A673 (cell line): ENCODE measurements at regions of chr20 and their contacts with region 1.

Region 1: GRCh38 chr20:34426026-34426425 is 63.0 kb downstream of the ITCH start:
- DNase-seq: no peak
- H3K4me3 ChIP-seq: no peak overlapping the region
- H3K27ac ChIP-seq: no peak overlapping the region
- H3K4me1 ChIP-seq: no peaks in the 10 kb centered on the region
- H3K27me3 ChIP-seq: no peaks in the 10 kb centered on the region
- CTCF ChIP-seq: no peak

Region 2: DNA sequence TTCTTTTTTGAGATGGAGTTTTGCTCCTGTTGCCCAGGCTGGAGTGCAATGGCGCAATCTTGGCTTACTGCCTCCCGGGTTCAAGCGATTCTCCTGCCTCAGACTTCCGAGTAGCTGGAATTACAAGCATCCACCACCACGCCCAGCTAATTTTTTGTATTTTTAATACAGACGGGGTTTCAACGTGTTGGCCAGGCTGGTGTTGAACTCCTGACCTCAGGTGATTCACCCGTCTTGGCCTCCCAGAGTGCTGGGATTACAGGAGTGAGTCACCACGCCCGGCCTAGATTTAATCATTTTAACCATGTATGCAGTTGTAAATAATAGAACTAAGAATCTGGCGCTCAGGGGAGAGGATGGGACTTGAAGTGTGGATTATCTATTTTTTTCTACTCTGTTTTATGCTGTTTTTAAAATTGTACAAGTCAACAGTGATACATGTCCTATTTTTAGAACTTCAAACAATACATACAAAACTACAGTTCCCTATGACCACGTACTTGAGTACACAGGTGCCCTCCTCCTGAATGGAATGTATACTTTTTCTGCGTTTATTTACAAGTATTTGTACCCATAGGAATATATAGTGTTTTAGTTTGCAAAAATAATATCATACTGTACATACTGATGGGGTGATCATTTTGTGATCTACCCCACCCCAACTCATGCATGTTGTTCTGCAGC is 35.1 kb before region 1 on chr20:
- CTCF ChIA-PET with region 1: no interaction called
- POLR2A ChIA-PET with region 1: interaction called, 24 read pairs
- intact Hi-C with region 1: no loop called
- DNase-seq: peak; percentile 44
- H3K4me3 ChIP-seq: no peak overlapping the region
- H3K27ac ChIP-seq: no peak overlapping the region
- H3K4me1 ChIP-seq: peaks cover 26% of the 10 kb centered on the region
- H3K27me3 ChIP-seq: no peaks in the 10 kb centered on the region
- CTCF ChIP-seq: no peak